GM10248 (cell line): ENCODE measurements at regions of chr6 and their contacts with region 1.

Region 1: DNA sequence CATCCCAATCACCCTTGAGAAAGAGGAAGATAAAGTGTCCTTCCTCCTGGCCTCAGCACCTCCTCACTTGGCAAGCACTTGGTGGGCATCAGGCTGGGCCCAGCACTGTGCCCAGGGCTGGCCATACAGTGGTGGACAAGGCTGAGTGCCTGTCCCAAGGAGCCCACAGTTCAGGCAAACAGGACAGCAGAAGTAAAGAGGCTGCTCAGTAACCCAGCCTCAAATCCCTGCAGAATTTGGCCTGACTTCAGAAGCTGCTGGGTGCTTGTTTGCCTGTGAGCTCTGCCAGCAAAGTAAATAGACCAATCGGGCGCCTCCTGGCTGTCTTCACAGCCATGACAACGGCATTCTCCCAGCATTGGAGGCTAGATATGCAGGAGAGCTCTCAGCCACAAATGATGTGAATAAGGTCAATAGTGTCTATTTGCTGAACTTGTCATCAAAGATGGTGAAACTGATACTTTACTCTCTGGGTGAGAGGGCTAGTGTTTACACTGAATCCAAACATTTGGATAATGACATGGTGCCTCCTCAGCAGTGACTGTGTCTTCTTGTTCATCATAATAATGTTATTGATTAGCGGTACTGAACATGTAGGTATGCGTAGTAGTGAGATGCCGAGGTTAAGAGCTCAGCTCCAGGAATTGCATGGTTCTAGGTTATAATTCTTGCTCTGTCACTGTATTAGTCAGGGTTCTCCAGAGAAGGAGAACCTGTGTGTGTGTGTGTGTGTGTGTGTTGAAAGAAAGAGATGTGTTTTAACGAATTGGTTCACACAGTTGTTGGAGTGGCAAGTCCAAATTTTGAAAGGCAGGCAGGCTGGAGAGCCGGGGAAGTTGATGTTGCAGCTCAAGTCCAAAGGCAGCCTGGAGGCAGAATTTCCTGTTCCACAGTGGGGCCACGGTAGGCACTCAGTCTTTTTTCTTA is 36.8 kb upstream of the FANCE start:
- DNase-seq: no peak
- CTCF ChIP-seq: peak; percentile 34

Region 2: GRCh38 chr6:35402136-35402855 is 13.0 kb before region 1 on chr6:
- CTCF ChIA-PET with region 1: interaction called, 6 read pairs
- POLR2A ChIA-PET with region 1: interaction called, 10 read pairs
- DNase-seq: peak; percentile 53
- CTCF ChIP-seq: no peak

Region 3: DNA sequence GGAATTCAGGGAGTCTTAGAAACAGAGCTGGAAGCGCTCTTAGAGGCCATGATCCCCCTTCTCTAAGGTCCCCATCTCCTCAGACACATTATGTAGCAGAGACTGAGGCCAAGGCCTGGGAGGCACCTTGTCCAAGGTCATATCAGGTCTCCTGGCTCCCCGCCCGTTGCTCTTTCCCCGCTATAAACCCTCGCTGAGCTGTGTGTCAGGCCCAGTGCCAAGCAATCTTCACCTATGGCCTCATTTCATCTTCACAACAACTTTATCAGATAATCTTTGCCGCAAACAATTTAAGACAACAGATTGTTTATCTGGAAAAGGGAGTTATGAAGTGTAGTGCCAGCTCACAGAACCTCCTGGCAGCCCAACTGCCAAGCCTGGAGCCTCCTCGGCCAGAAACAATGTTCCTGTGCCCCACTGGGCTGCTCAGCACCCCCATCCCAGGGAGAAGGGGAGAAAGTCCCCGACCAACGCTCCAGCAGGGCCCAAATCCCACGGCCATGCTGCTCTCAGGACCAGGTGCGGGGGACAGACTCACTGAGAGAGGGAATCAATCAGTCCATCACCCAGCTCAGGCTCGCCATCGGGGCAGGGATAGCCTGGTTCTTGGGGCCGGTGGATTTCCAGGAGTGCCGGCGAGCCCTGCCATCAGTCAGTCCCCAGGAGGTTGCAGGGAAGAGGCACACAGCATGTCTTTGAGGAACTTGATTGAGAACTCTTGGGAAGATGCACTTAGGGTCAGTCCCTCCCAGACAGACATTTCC is 19.9 kb after region 1 on chr6:
- CTCF ChIA-PET with region 1: no interaction called
- POLR2A ChIA-PET with region 1: no interaction called
- DNase-seq: no peak
- CTCF ChIP-seq: no peak

Region 4: GRCh38 chr6:35452186-35453090 is 37.1 kb after region 1 on chr6 and contains the start of gene FANCE:
- CTCF ChIA-PET with region 1: interaction called, 15 read pairs
- POLR2A ChIA-PET with region 1: no interaction called
- DNase-seq: peak; percentile 98
- CTCF ChIP-seq: no peak